GM12878 (cell line): ENCODE measurements at regions of chr3 and their contacts with region 1.

Region 1: GRCh38 chr3:183515968-183516851 is 39.3 kb downstream of the KLHL6 start:
- DNase-seq: peak; percentile 77
- ATAC-seq: peak; percentile 61
- H3K4me3 ChIP-seq: no peak overlapping the region
- H3K27ac ChIP-seq: peak overlapping the region; percentile 7; the same call in 1 of the 2 replicates
- H3K4me1 ChIP-seq: peaks cover 43% of the 10 kb centered on the region
- H3K27me3 ChIP-seq: no peaks in the 10 kb centered on the region
- CTCF ChIP-seq: peak; percentile 15 to 21 (median 20); a peak in 3 of 6 replicates
- EP300 ChIP-seq: peak in 1 of 2 experiments; percentile 91; a peak in 2 of 4 replicates
- POLR2A ChIP-seq: peak; percentile 33; the same call in 1 of the 2 replicates
- RAD21 ChIP-seq: peak; percentile 32

Region 2: DNA sequence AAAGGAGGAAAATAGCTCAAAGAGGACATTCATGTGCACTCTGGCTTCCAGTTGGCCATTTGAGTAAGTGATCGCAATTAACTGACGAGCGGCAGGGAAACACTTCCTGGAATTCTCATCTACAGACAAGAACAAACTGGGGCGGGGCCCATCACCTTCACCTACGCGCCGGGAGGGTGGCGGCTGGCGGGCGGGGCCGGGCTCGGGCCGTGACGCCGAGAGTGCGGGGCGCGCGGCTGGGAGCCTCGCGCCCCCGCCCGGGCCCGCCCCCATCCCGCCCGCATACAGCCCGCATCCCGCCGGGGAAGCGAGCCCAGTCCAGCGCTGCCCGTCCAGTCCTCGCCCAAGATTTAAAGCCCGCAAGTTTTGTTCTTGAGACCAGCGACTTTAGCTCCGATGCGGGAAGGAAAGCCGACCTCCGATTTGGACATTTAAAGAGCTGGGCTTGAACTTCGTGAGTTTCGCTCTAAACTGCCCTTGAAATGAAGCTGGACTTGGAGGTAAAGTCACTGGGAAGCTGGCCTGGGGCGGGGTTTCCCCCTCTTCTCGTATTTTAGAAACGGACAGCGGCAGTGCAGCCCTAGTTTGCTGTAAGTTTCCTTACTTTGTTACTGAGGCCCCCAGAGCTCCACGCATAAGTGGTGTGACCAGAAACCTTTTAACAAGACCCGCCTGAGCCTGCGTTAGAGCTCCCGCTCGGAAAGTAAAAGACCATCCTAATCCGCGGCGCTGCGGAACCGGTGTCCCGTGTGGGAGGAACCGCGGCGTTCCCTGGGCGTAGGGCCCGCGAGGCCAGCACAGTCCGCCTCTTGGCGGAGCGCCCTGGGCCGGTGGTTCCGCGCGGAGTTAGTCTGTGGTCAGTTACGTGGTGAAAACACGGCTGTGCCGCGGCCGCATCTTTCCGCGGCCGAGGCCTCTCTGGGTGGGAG is 263.0 kb before region 1 on chr3 and contains the start of gene B3GNT5:
- CTCF ChIA-PET with region 1: no interaction called
- POLR2A ChIA-PET with region 1: no interaction called
- RAD21 ChIA-PET with region 1: no interaction called
- SMC1A ChIA-PET with region 1: no interaction called
- in situ Hi-C with region 1: no loop called
- intact Hi-C with region 1: no loop called
- DNase-seq: no peak
- ATAC-seq: peak; percentile 33
- H3K4me3 ChIP-seq: peak within 1 kb of the TSS; percentile 53
- H3K27ac ChIP-seq: no peak within 1 kb of the TSS
- H3K4me1 ChIP-seq: no peaks in the 10 kb centered on the region
- H3K27me3 ChIP-seq: peaks cover 9 to 21% of the 10 kb centered on the region in 2 experiments
- CTCF ChIP-seq: no peak
- EP300 ChIP-seq: no peak
- POLR2A ChIP-seq: no peak
- RAD21 ChIP-seq: no peak
- polyA plus RNA-seq, gene B3GNT5: 0.29 to 0.50 TPM

Region 3: GRCh38 chr3:183275418-183275817 is 240.8 kb before region 1 on chr3:
- CTCF ChIA-PET with region 1: no interaction called
- POLR2A ChIA-PET with region 1: no interaction called
- RAD21 ChIA-PET with region 1: no interaction called
- SMC1A ChIA-PET with region 1: no interaction called
- in situ Hi-C with region 1: no loop called
- intact Hi-C with region 1: no loop called
- DNase-seq: no peak
- ATAC-seq: no peak
- H3K4me3 ChIP-seq: no peak overlapping the region
- H3K27ac ChIP-seq: no peak overlapping the region
- H3K4me1 ChIP-seq: no peaks in the 10 kb centered on the region
- H3K27me3 ChIP-seq: no peaks in the 10 kb centered on the region
- CTCF ChIP-seq: no peak
- EP300 ChIP-seq: no peak
- POLR2A ChIP-seq: no peak
- RAD21 ChIP-seq: no peak

Region 4: DNA sequence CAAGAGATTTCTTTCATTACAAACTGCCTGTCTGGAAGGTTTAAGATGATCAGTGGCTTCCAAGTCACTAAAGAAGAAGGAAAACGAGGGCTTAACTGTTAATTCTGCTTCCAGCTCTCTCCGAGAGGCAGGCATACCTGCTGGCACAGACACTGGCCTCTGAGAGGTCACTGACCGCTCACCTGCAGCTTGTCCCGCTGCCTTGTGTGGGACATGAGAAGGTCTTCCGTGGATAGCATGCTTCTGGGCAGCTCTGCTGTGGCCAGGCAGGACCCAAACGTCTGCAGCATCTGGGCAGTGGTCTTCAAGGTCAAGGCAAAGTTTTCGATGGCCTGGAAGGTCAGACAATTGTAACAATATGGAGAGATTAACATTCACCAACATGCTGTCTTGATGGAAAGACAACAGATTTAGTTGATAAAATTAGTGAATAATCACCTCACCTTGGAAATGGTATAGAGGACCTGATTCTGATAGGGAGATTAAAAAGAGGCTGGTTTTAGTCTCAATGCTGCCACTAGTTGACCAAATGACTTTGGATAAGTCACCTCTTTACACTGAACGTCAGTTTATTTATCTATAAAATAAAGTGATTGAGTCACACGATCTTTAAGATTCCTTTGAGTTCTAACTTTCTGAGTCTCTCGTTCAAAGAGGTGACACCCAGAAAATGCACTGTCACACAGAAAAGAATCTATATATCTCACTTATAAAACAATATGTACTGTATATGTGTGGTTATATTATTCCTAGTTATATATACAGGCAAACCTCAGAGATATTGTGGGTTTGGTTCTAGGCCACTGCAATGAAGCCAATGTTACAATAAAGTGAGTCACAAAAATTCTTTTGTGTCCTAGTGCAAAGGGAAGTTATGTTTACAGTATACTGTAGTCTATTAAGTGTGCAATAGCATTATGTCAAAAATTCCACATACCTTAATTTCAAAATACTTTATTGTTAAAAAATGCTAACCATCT is 198.0 kb before region 1 on chr3:
- CTCF ChIA-PET with region 1: no interaction called
- POLR2A ChIA-PET with region 1: no interaction called
- RAD21 ChIA-PET with region 1: no interaction called
- SMC1A ChIA-PET with region 1: no interaction called
- in situ Hi-C with region 1: no loop called
- intact Hi-C with region 1: no loop called
- DNase-seq: no peak
- ATAC-seq: no peak
- H3K4me3 ChIP-seq: no peak overlapping the region
- H3K27ac ChIP-seq: no peak overlapping the region
- H3K4me1 ChIP-seq: no peaks in the 10 kb centered on the region
- H3K27me3 ChIP-seq: no peaks in the 10 kb centered on the region
- CTCF ChIP-seq: no peak
- EP300 ChIP-seq: no peak
- POLR2A ChIP-seq: no peak
- RAD21 ChIP-seq: no peak

Region 5: DNA sequence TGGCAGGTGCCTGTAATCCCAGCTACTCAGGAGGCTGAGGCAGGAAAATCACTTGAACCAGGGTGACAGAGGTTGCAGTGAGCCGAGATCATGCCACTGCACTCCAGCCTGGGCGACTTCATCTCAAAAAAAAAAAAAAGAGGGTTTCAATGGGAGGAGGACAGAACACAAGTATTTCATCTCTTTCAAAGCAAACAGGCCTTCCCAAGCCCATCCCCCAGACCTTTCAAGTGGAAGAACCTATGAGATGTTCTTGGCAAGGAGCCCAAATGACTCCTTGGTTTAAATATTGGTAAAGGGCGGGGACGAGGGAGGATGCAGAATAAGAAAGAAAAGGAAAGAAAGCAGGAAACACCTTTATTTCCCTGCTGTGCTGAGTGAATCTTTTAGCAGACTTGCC is 25.5 kb before region 1 on chr3:
- CTCF ChIA-PET with region 1: interaction called, 3 read pairs
- POLR2A ChIA-PET with region 1: interaction called, 4 read pairs
- RAD21 ChIA-PET with region 1: no interaction called
- SMC1A ChIA-PET with region 1: interaction called, 10 read pairs
- in situ Hi-C with region 1: no loop called
- intact Hi-C with region 1: no loop called
- DNase-seq: no peak
- ATAC-seq: no peak
- H3K4me3 ChIP-seq: no peak overlapping the region
- H3K27ac ChIP-seq: no peak overlapping the region
- H3K4me1 ChIP-seq: no peaks in the 10 kb centered on the region
- H3K27me3 ChIP-seq: no peaks in the 10 kb centered on the region
- CTCF ChIP-seq: no peak
- EP300 ChIP-seq: no peak
- POLR2A ChIP-seq: no peak
- RAD21 ChIP-seq: no peak

Region 6: GRCh38 chr3:184811999-184812661 is 1295.9 kb after region 1 on chr3 and contains the start of gene VPS8:
- CTCF ChIA-PET with region 1: no interaction called
- POLR2A ChIA-PET with region 1: no interaction called
- RAD21 ChIA-PET with region 1: no interaction called
- SMC1A ChIA-PET with region 1: no interaction called
- in situ Hi-C with region 1: no loop called
- intact Hi-C with region 1: no loop called
- DNase-seq: peak; percentile 91
- ATAC-seq: peak; percentile 95
- H3K4me3 ChIP-seq: peak within 1 kb of the TSS; percentile 74
- H3K27ac ChIP-seq: peak within 1 kb of the TSS; percentile 54
- H3K4me1 ChIP-seq: peaks cover 16% of the 10 kb centered on the region
- H3K27me3 ChIP-seq: no peaks in the 10 kb centered on the region
- CTCF ChIP-seq: peak; percentile 41 to 49 (median 45); a peak in 5 of 6 replicates
- EP300 ChIP-seq: no peak
- POLR2A ChIP-seq: peak; percentile 93
- RAD21 ChIP-seq: no peak
- polyA plus RNA-seq, gene VPS8: 8.9 to 11.4 TPM